ENCODE measurements at regions of chr17 and their contacts with region 1.

Region 1: DNA sequence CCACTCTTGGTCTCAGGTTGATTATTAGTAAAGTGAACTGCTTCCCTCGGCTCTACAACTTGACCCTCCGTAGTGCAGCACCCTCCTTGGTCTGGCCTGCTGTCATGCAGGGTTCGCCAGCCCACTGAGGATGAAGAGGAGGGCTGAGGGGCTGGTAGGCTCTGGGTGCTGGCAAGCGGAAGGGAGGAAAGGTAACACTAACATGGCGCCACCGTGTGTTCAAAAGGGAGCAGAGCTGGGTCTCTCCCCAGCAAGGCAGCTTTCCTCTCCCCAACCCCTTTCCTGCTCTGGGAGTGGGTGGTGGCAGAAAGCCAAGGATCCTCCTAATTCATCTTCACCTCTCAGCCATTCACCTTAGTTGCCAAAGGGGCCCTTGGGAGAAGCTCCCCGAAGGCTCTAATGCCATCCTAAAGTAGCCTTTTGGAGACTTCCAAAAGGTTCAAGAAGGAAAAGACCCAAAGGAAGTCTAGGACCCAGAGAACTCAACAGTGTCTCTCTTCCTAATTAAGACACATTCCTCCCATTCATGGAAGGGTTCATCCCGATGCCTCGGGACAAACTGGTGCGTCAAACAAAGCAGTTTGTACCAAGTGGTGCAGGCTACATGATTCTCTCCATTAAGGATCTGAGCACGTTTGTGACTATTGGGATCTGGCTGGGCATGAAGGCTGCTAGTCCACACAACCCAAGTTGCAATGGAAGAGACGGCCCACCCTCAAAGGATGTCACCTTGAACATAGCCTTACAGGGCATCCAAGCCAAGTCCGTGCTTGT is 90.8 kb upstream of the TOB1 start:
- DNase-seq: peak; percentile 54 to 77 (median 59)
- H3K4me3 ChIP-seq: no peak overlapping the region
- H3K4me3 Mint-ChIP-seq: no peak overlapping the region
- H3K27ac ChIP-seq: no peak overlapping the region
- H3K27ac Mint-ChIP-seq: peak overlapping the region in 4 of 8 donors; percentile 34 to 77 (median 67)
- H3K4me1 ChIP-seq: peaks cover 5% of the 10 kb centered on the region
- H3K4me1 Mint-ChIP-seq: peaks cover 2 to 5% (median 3%) of the 10 kb centered on the region in 3 donors
- H3K27me3 ChIP-seq: no peaks in the 10 kb centered on the region
- H3K27me3 Mint-ChIP-seq: no peaks in the 10 kb centered on the region

Region 2: GRCh38 chr17:50904521-50905459 is 52.1 kb before region 1 on chr17:
- CTCF ChIA-PET with region 1: interaction called, 12 read pairs
- POLR2A ChIA-PET with region 1: no interaction called
- DNase-seq: no peak
- H3K4me3 ChIP-seq: no peak overlapping the region
- H3K4me3 Mint-ChIP-seq: peak overlapping the region in 4 of 7 donors; percentile 18 to 70 (median 42)
- H3K27ac ChIP-seq: peak overlapping the region; percentile 55
- H3K27ac Mint-ChIP-seq: peak overlapping the region; percentile 84 to 96 (median 92)
- H3K4me1 ChIP-seq: peaks cover 53% of the 10 kb centered on the region
- H3K4me1 Mint-ChIP-seq: peaks cover 47 to 58% (median 51%) of the 10 kb centered on the region in 3 donors
- H3K27me3 ChIP-seq: no peaks in the 10 kb centered on the region
- H3K27me3 Mint-ChIP-seq: peaks cover 0 to 1% of the 10 kb centered on the region in 2 donors

Region 3: GRCh38 chr17:50967795-50968194 is 10.9 kb after region 1 on chr17:
- CTCF ChIA-PET with region 1: interaction called, 12 read pairs
- POLR2A ChIA-PET with region 1: no interaction called
- DNase-seq: no peak
- H3K4me3 ChIP-seq: no peak overlapping the region
- H3K4me3 Mint-ChIP-seq: no peak overlapping the region
- H3K27ac ChIP-seq: no peak overlapping the region
- H3K27ac Mint-ChIP-seq: peak overlapping the region in 2 of 8 donors; percentile 1 to 46
- H3K4me1 ChIP-seq: no peaks in the 10 kb centered on the region
- H3K4me1 Mint-ChIP-seq: peaks cover 3 to 8% (median 7%) of the 10 kb centered on the region in 3 donors
- H3K27me3 ChIP-seq: no peaks in the 10 kb centered on the region
- H3K27me3 Mint-ChIP-seq: no peaks in the 10 kb centered on the region